T-cell (primary cell): ENCODE measurements at regions of chr15 and their contacts with region 1.

Region 1: GRCh38 chr15:90086868-90087268 is 15.4 kb downstream of the IDH2 start:
- DNase-seq: peak in 28 of 35 experiments; percentile 23 to 65 (median 46)
- ATAC-seq: peak; percentile 49 to 79 (median 70)
- H3K4me3 ChIP-seq: no peak overlapping the region
- H3K4me3 Mint-ChIP-seq: no peak overlapping the region
- H3K27ac ChIP-seq: no peak overlapping the region
- H3K27ac Mint-ChIP-seq: peak overlapping the region; percentile 34 to 77
- H3K4me1 ChIP-seq: peaks cover 0 to 7% of the 10 kb centered on the region in 2 experiments
- H3K4me1 Mint-ChIP-seq: peaks cover 7 to 14% (median 13%) of the 10 kb centered on the region in 3 donors
- H3K27me3 ChIP-seq: no peaks in the 10 kb centered on the region
- H3K27me3 Mint-ChIP-seq: no peaks in the 10 kb centered on the region

Region 2: GRCh38 chr15:89893696-89894455 is 193.0 kb before region 1 on chr15 and contains the start of gene AP3S2:
- CTCF ChIA-PET with region 1: interaction called in 1 of 2 experiments, 10 read pairs
- POLR2A ChIA-PET with region 1: no interaction called
- DNase-seq: peak; percentile 74 to 92 (median 85)
- ATAC-seq: peak; percentile 94 to 97 (median 94)
- H3K4me3 ChIP-seq: peak within 1 kb of the TSS; percentile 95 to 99
- H3K4me3 Mint-ChIP-seq: peak within 1 kb of the TSS; percentile 95 to 98 (median 96)
- H3K27ac ChIP-seq: peak within 1 kb of the TSS; percentile 88
- H3K27ac Mint-ChIP-seq: peak within 1 kb of the TSS; percentile 95
- H3K4me1 ChIP-seq: peaks cover 13 to 28% of the 10 kb centered on the region in 2 experiments
- H3K4me1 Mint-ChIP-seq: peaks cover 42 to 50% (median 48%) of the 10 kb centered on the region in 3 donors
- H3K27me3 ChIP-seq: no peaks in the 10 kb centered on the region
- H3K27me3 Mint-ChIP-seq: no peaks in the 10 kb centered on the region
- total RNA-seq, gene AP3S2: 22.8 to 30.5 (median 24.9) TPM

Region 3: DNA sequence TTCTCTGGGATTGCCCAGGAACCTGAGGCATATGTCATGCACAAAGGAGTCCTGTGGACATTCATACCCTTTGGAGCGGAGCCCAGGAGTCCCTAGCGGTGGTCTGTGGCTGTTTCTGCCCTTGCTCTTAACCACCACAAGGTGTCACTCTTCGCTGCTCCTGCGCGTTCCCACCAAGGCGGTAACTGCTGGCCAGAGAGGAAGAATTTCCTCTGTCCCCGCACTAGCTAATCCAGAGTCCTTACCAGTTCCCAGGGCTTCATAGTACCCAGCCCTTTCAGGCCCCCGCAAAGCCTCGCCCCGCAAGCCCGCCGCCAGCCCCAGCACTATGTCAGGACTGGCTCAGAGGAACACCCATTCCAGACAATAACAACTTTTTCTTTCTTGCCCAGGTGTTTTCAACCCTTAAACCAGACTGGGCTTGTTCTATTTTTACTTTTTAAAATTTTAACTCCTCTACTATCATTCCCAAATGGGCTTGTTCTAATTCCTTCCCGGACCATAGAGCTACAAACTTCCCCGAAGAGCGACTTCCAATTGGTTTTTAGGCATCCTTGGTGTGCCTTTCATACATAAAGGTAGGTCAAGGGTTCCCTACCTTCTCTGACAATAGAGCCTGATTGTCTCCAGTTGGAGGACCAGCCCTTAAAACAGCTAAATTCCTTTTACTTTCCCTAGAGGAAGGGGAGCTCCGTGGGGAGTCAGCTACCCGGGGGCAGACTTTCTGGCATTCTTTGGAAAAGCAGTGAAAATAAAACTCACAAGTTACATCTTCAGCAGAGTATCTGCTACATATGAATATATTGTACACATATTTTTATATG is 233.4 kb after region 1 on chr15:
- CTCF ChIA-PET with region 1: interaction called in 1 of 2 experiments, 12 read pairs
- POLR2A ChIA-PET with region 1: no interaction called
- DNase-seq: peak; percentile 24 to 87 (median 56)
- ATAC-seq: peak; percentile 96 to 99 (median 96)
- H3K4me3 ChIP-seq: peak overlapping the region in 1 of 2 donors; percentile 23
- H3K4me3 Mint-ChIP-seq: no peak overlapping the region
- H3K27ac ChIP-seq: no peak overlapping the region
- H3K27ac Mint-ChIP-seq: peak overlapping the region in 1 of 2 donors; percentile 17
- H3K4me1 ChIP-seq: peaks cover 4 to 6% of the 10 kb centered on the region in 2 experiments
- H3K4me1 Mint-ChIP-seq: peaks cover 6 to 11% (median 6%) of the 10 kb centered on the region in 3 donors
- H3K27me3 ChIP-seq: peaks cover 0 to 3% of the 10 kb centered on the region in 2 experiments
- H3K27me3 Mint-ChIP-seq: peaks cover 0 to 3% of the 10 kb centered on the region in 2 donors

Region 4: DNA sequence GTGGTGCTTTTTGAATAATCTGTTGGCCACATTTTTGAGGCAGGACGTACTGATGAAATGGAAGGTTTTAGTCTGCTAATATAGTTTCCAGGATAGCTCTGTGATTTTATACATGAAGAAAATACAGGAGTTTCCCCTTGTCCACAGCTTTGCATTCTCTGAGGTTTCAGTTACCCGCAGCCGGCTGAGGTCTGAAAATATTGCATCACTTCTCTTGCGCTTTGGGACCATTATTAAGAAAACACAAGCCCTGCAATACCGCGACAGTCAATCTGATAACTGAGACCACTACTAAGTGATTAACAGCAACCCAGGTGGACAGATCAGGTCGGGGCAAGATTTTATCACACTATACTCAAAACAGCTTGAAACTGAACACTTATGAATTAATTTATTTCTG is 663.3 kb after region 1 on chr15:
- CTCF ChIA-PET with region 1: no interaction called
- POLR2A ChIA-PET with region 1: interaction called in 1 of 2 experiments, 12 read pairs
- DNase-seq: peak in 2 of 35 experiments; percentile 2 to 26
- ATAC-seq: no peak
- H3K4me3 ChIP-seq: no peak overlapping the region
- H3K4me3 Mint-ChIP-seq: peak overlapping the region in 1 of 3 donors; percentile 44
- H3K27ac ChIP-seq: no peak overlapping the region
- H3K27ac Mint-ChIP-seq: no peak overlapping the region
- H3K4me1 ChIP-seq: no peaks in the 10 kb centered on the region
- H3K4me1 Mint-ChIP-seq: peaks cover 0 to 20% (median 11%) of the 10 kb centered on the region in 3 donors
- H3K27me3 ChIP-seq: no peaks in the 10 kb centered on the region
- H3K27me3 Mint-ChIP-seq: no peaks in the 10 kb centered on the region

Region 5: DNA sequence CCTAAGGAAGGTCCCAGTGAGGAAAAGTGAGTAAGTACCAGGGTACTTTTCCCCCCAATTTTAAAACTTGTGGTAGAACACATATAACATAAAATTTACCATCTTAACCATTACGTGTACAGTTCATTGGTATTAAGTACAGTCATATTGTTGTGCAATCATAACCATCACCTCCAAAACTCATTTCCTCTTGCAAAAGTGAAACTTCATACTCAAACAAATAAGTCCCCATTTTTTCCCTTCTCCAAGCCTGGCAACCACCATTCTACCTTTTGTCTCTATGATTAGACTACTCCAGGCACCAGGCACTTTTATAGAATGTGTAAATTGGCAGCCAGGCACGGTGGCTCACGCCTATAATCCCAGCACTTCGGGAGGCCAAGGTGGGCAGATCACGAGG is 895.3 kb after region 1 on chr15:
- CTCF ChIA-PET with region 1: no interaction called
- POLR2A ChIA-PET with region 1: interaction called in 1 of 2 experiments, 10 read pairs
- DNase-seq: no peak
- ATAC-seq: no peak
- H3K4me3 ChIP-seq: no peak overlapping the region
- H3K4me3 Mint-ChIP-seq: no peak overlapping the region
- H3K27ac ChIP-seq: no peak overlapping the region
- H3K27ac Mint-ChIP-seq: no peak overlapping the region
- H3K4me1 ChIP-seq: no peaks in the 10 kb centered on the region
- H3K4me1 Mint-ChIP-seq: peaks cover 0 to 11% (median 0%) of the 10 kb centered on the region in 3 donors
- H3K27me3 ChIP-seq: no peaks in the 10 kb centered on the region
- H3K27me3 Mint-ChIP-seq: no peaks in the 10 kb centered on the region